ENCODE measurements at regions of chr16 and their contacts with region 1.

Region 1: GRCh38 chr16:85114909-85115567 is 2.8 kb upstream of the CIBAR2 start:
- DNase-seq: peak; percentile 90 to 96
- ATAC-seq: peak; percentile 92 to 94
- H3K4me3 ChIP-seq: peak overlapping the region; percentile 27; the same call in 2 of the 3 replicates
- H3K27ac ChIP-seq: peak overlapping the region; percentile 73 to 84
- H3K4me1 ChIP-seq: peaks cover 20% of the 10 kb centered on the region
- CTCF ChIP-seq: peak; percentile 90
- EP300 ChIP-seq: no peak
- POLR2A ChIP-seq: no peak
- RAD21 ChIP-seq: peak; percentile 96 to 97

Region 2: DNA sequence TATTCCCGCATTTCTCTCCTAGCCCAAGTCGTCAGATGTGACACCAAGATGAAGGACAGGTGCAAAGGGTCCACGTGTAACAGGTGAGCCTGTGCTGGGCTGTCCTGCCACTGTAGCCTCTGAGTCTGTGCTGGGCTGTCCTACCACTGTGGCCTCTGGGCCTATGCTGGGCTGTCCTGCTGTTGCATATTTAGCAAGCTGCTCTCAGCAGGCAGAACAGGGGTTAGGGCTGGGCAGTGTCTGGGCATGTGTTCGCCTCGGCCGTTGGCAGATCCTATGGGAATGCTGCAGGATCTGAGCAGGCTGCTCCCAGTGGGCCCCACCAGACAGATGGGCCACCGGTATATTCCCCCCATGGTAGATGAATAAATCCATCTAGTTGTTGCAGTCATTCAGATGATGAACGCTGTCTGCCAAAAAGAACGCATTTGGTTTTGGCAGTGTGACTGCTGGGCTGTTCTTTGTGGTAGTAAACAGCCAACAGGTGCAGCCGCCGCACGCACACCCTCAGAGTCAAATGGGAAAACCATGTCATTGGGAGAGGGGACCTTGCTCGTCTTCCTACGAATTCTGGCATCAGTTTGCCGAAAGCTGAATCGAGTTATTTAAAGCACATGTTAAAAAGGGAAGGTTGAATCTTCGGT is 246.1 kb before region 1 on chr16:
- CTCF ChIA-PET with region 1: no interaction called
- POLR2A ChIA-PET with region 1: no interaction called
- DNase-seq: no peak
- ATAC-seq: no peak; a peak in 2 of 6 replicates
- H3K4me3 ChIP-seq: no peak overlapping the region
- H3K27ac ChIP-seq: no peak overlapping the region
- H3K4me1 ChIP-seq: no peaks in the 10 kb centered on the region
- CTCF ChIP-seq: no peak
- EP300 ChIP-seq: no peak
- POLR2A ChIP-seq: no peak
- RAD21 ChIP-seq: no peak

Region 3: GRCh38 chr16:85104821-85105391 is 10.1 kb before region 1 on chr16:
- CTCF ChIA-PET with region 1: interaction called, 38 read pairs
- POLR2A ChIA-PET with region 1: no interaction called
- DNase-seq: no peak
- ATAC-seq: peak; percentile 35 to 56; a peak in 5 of 6 replicates
- H3K4me3 ChIP-seq: no peak overlapping the region
- H3K27ac ChIP-seq: no peak overlapping the region
- H3K4me1 ChIP-seq: no peaks in the 10 kb centered on the region
- CTCF ChIP-seq: no peak
- EP300 ChIP-seq: no peak
- POLR2A ChIP-seq: no peak
- RAD21 ChIP-seq: no peak

Region 4: DNA sequence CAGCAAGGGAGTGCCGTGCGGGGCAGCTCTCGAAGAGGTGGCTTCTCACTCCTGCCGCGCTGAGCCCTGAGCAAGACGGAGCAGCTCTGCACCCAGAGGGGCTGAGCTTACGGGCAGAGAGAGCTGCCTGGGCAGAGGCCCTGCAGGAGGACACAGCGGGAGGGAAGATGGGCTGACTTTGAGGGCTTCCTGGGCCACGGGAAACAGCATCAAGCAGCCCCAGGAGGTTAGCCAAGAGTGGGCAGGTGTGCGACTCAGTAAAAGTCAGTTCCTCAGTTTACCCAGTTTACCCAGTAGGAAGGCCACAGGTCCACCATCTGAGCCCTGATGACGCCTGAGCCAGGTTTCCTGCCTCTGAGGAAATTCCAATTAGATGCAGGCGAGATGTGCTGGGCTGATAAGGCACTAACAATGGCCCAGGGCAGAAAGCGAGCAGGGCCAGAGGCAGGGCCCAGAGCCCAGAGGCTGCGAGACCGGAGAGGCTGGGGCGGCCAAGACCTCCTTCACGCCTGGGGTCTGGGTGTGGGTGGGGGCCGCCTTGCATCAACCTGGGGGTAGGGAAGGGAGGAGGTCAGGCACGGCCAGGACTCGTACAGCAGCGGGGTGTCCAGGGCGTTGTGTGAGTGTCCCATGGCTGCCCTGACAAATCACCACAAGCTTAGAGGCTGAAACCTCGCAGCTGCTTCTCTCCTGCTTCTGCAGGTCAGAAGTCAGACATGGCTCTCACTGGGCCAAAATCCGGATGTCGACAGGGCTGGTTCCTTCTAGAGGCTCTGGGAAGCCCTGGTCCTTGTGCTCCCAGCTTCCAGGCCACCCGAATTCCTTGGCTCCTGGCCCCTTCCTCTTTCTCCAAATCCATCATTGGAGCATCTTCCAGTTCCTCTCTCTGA is 29.2 kb after region 1 on chr16:
- CTCF ChIA-PET with region 1: interaction called, 16 read pairs
- POLR2A ChIA-PET with region 1: no interaction called
- DNase-seq: no peak
- ATAC-seq: no peak; a peak in 1 of 6 replicates
- H3K4me3 ChIP-seq: no peak overlapping the region
- H3K27ac ChIP-seq: no peak overlapping the region
- H3K4me1 ChIP-seq: 0 out of 3 replicates have a peak, but pooled peaks cover 7% of the 10 kb centered on the region
- CTCF ChIP-seq: no peak
- EP300 ChIP-seq: no peak
- POLR2A ChIP-seq: no peak
- RAD21 ChIP-seq: no peak

Region 5: DNA sequence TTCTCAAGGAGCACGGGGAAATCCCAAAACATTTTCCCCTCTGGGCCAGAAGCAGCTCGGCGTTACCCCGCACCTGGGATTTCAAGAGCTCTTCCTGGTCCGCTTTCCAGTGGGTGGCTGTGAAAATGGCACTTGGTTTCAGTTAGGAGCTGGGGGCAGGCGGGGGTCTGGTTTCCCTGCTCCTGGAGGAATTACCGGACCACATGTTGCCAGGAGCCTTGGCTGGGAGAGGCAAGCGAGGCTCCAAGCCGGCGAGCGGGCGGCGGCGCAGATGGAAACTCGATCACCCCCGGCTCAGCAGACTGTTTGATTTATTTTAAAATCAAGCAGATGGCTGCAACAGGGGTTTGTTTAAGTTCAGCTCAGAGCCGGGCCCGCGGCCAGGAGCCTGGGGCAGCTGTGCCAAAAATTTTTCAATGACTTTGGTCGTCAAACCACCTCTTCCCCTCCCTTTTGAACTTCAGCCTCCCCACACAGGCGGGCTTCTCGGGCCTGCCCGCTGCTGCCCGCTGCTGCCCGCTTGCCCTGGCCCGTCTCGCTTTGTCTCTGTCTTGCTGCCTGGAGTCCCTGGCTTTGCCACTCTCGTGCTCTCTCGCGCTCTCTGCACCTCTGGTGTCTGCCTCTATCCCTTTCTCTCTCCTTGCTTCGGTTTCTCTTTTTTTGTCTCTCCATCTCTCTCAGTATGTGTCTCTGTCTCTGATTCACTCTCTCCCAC is 105.2 kb after region 1 on chr16:
- CTCF ChIA-PET with region 1: interaction called, 13 read pairs
- POLR2A ChIA-PET with region 1: no interaction called
- DNase-seq: no peak
- ATAC-seq: peak in 1 of 2 experiments; percentile 33; a peak in 2 of 6 replicates
- H3K4me3 ChIP-seq: no peak overlapping the region
- H3K27ac ChIP-seq: peak overlapping the region in 1 of 2 experiments; percentile 57; a peak in 2 of 6 replicates
- H3K4me1 ChIP-seq: peaks cover 7% of the 10 kb centered on the region; the same call in 1 of the 3 replicates
- CTCF ChIP-seq: no peak
- EP300 ChIP-seq: no peak
- POLR2A ChIP-seq: no peak
- RAD21 ChIP-seq: no peak

Region 6: GRCh38 chr16:85262558-85263238 is 147.7 kb after region 1 on chr16:
- CTCF ChIA-PET with region 1: interaction called, 12 read pairs
- POLR2A ChIA-PET with region 1: no interaction called
- DNase-seq: no peak
- ATAC-seq: no peak
- H3K4me3 ChIP-seq: no peak overlapping the region
- H3K27ac ChIP-seq: no peak overlapping the region
- H3K4me1 ChIP-seq: no peaks in the 10 kb centered on the region
- CTCF ChIP-seq: no peak
- EP300 ChIP-seq: no peak
- POLR2A ChIP-seq: no peak
- RAD21 ChIP-seq: no peak

Region 7: DNA sequence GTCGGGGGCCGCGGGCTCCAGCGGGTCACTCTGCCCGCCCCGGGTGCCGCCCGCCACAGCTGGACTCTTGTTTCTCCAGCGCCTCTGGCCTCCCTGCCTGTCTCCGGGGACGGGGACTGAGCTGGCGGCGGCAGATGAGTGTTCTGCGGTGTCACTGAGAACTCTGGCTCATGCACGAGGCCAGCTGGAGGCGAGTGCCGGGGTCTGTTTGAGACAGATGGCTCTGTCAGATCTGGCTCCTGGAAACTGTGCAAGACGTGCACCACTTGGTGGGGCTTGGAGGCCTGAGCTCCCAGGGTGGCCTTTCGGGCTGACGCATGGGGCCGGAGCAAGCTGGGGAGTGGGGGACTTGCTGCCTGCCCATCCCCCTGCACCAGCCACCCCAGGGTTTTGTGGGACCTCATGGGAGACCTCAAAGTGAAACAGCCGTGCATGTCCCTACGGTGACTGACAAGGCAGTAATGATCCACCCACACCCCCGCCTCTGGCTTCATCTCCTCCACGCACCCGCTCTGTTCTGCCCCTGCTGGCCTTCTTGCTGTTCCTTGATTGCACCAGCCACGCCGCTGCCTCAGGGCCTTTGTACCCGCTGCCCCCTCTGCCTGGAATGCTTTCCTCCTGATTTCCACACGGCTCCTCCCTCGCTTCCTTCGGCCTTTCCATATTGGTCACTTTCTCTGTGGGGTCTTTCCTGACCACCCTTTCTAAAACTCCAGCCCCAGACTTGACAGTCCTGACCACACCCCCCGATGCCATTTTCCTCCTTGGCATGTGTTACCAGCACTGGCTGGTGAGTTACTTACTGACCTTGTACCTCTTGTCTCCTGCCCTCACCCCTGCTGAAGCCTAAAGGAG is 172.2 kb after region 1 on chr16:
- CTCF ChIA-PET with region 1: interaction called, 10 read pairs
- POLR2A ChIA-PET with region 1: no interaction called
- DNase-seq: no peak
- ATAC-seq: 0 out of 6 replicates have a peak, but pooled peaks of 1 of the 2 experiments have one; percentile 23
- H3K4me3 ChIP-seq: no peak overlapping the region
- H3K27ac ChIP-seq: no peak overlapping the region
- H3K4me1 ChIP-seq: no peaks in the 10 kb centered on the region
- CTCF ChIP-seq: no peak
- EP300 ChIP-seq: no peak
- POLR2A ChIP-seq: no peak
- RAD21 ChIP-seq: no peak

Region 8: DNA sequence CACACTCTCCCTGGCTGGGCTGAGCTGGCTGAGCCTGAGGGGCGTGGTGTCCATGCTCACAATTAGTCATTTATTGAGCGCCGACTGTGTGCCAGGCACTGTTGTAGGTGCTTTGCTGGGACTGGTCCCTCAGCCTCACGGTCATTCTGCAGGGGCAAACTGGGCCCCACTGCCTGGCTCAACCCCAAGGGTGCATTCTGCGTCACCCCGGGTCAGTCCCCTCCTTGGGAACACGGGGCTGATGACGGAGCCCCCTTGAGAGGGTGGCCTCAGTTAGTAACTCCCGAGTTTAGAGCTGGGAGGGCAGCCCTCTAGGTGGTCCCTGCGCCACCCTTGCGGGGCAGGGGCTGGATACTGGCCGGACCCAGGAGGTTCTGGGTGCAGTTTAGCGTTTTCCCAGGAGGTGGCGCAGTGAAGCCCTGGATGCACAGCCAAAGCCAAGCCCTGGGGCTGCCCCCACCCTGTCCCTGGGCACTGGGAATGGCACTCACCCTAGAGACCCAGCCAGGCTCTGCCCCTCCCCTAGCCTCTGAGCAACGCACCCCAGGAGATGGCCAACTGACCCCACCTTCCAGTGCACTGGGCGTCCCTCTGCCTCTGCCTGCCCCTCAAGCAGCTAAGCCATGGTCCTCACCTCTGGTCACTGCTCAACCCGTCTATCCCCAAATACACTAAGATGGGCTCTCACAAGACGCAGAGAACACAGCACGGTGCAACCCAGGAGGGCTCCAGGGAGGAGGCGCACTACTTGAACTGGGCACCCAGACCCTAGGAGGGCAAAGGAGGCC is 254.9 kb after region 1 on chr16:
- CTCF ChIA-PET with region 1: interaction called, 15 read pairs
- POLR2A ChIA-PET with region 1: no interaction called
- DNase-seq: peak; percentile 33 to 79
- ATAC-seq: peak; percentile 68 to 92; a peak in 5 of 6 replicates
- H3K4me3 ChIP-seq: no peak overlapping the region
- H3K27ac ChIP-seq: peak overlapping the region in 1 of 2 experiments; percentile 57; a peak in 2 of 6 replicates
- H3K4me1 ChIP-seq: peaks cover 17% of the 10 kb centered on the region
- CTCF ChIP-seq: peak; percentile 70
- EP300 ChIP-seq: no peak
- POLR2A ChIP-seq: no peak
- RAD21 ChIP-seq: peak; percentile 64 to 70